Psoas muscle (tissue), 8 donors: ENCODE measurements at regions of chr17 and their contacts with region 1.

Region 1: GRCh38 chr17:70184770-70185169 is 15.4 kb downstream of the KCNJ2 start:
- DNase-seq: no peak
- ATAC-seq: peak; percentile 56 to 84 (median 82)
- H3K4me3 ChIP-seq: no peak overlapping the region
- H3K27ac ChIP-seq: peak overlapping the region; percentile 28
- H3K4me1 ChIP-seq: peaks cover 38% of the 10 kb centered on the region
- H3K27me3 ChIP-seq: no peaks in the 10 kb centered on the region
- CTCF ChIP-seq: no peak

Region 2: DNA sequence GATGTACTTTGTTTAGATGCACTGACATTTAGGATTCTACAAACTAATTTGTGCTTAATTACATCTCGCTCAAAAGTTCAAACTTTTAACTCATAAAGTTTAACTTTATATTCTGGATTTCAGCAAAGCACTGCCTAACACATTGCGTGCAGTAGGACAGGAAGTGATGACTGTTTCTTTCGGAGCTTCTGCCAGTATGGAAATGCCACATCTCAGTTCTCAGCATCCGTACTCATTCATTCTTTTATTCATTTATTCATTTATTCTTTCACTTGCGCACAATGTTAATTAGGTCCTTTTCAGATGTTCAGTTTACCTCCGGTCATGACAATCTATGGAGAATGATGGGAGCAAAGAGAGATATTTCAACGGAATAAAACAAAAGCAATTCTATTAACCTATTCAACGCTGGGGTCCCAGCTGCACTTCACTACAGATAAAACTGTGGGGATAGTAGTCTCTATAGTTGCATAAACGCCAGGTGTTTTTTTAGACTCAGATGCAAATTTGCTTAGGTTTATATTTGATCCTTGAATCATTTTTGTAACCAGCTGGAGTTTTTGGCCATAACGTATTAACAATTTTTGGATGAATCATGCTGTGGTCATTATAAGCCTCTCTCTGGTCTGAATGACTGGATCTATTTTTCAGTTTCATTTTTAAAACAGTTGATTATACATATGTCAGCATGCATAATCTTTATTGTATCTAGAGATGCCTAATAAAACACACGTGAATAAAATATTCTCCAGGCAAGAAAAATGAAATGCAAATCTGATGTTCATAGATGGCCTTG is 128.5 kb after region 1 on chr17:
- intact Hi-C with region 1: loop called in 1 of 2 experiments (anchors 5 kb)
- DNase-seq: no peak
- ATAC-seq: no peak
- H3K4me3 ChIP-seq: no peak overlapping the region
- H3K27ac ChIP-seq: no peak overlapping the region
- H3K4me1 ChIP-seq: peaks cover 27% of the 10 kb centered on the region
- H3K27me3 ChIP-seq: no peaks in the 10 kb centered on the region
- CTCF ChIP-seq: no peak

Region 3: DNA sequence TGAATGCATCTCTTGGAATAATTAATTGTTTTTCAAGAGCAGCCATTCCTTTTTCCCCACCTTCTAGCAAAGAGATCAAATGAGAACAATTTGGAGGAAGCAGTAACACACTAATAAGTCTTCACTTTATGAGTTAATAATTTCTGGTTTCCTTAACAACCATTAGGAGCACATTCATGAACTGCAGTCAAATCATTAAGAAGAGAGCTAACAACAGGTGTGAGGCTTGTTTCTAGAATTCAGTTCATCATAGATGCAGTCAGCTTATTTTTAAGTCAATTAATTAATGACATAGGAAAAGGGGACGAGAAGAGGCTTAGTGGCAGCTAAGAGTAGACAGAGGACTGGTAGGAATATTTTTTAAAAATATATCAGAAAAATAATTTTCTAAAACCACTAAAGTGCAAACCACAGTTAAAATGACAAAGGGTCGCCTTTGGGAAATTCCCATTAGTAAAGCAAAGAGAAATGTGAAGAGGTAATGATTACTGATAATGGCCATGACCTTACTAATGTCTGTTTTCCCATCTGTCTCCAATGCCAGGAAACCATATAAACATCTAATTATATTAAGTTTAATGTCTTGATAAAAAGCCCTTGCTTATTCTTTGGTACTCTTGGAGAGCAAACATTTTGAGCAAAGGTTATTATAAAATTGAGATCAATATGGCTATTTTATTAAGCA is 168.8 kb after region 1 on chr17:
- intact Hi-C with region 1: no loop called
- DNase-seq: no peak
- ATAC-seq: no peak
- H3K4me3 ChIP-seq: no peak overlapping the region
- H3K27ac ChIP-seq: no peak overlapping the region
- H3K4me1 ChIP-seq: no peaks in the 10 kb centered on the region
- H3K27me3 ChIP-seq: no peaks in the 10 kb centered on the region
- CTCF ChIP-seq: no peak